ENCODE measurements at regions of chr9 and their contacts with region 1.

Region 1: DNA sequence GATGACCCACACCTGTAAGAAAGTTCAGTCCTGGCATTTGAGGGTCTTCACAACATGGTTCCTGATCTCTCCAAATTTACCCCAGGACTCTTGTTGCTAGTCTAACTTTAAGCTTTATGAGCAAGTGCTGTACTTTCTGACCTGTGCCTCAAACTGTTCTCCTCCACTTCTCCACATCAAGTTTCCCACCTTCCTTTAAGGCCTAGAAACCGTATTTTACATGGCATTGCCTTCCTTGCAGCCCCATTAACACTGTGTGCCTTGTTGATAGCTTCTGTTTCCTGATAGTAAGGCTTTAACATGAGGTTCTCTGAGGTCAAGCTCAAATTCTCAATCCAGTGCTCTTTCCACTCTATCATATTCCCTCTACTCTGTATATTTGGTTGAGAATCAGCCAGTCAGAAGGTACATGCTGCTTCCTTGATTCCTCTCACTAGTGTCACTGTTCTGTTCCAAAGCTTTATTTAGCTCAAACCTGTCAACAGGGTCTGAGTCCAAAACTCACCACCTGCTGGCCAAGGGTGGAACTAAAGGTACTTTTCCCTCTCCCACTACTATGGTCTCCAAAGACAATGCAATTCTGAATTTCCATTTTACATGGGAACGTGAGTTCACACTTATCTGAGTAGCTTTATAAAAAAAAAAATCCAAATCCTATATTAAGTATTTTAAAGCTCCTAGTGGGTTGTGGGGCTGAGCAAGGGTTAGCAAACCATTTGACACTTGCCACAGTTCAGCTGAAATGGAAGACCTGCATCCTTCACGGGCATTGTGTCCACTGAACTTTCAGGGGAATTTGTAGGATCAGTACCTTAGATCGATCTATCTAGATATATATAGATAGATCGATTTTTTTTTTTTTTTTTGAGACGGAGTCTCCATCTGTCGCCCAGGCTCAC is 21.1 kb downstream of the VCP start:
- DNase-seq: peak; percentile 71
- ATAC-seq: peak; percentile 84
- H3K4me3 Mint-ChIP-seq: no peak overlapping the region
- H3K27ac Mint-ChIP-seq: peak overlapping the region; percentile 54
- H3K4me1 Mint-ChIP-seq: peaks cover 3% of the 10 kb centered on the region; the same call in 1 of the 2 replicates
- H3K27me3 Mint-ChIP-seq: no peaks in the 10 kb centered on the region
- CTCF ChIP-seq: peak; percentile 68

Region 2: GRCh38 chr9:34876096-34876495 is 175.2 kb before region 1 on chr9:
- CTCF ChIA-PET with region 1: no interaction called
- POLR2A ChIA-PET with region 1: no interaction called
- DNase-seq: no peak
- ATAC-seq: no peak
- H3K4me3 Mint-ChIP-seq: no peak overlapping the region
- H3K27ac Mint-ChIP-seq: no peak overlapping the region
- H3K4me1 Mint-ChIP-seq: no peaks in the 10 kb centered on the region
- H3K27me3 Mint-ChIP-seq: peaks cover 29% of the 10 kb centered on the region
- CTCF ChIP-seq: no peak

Region 3: DNA sequence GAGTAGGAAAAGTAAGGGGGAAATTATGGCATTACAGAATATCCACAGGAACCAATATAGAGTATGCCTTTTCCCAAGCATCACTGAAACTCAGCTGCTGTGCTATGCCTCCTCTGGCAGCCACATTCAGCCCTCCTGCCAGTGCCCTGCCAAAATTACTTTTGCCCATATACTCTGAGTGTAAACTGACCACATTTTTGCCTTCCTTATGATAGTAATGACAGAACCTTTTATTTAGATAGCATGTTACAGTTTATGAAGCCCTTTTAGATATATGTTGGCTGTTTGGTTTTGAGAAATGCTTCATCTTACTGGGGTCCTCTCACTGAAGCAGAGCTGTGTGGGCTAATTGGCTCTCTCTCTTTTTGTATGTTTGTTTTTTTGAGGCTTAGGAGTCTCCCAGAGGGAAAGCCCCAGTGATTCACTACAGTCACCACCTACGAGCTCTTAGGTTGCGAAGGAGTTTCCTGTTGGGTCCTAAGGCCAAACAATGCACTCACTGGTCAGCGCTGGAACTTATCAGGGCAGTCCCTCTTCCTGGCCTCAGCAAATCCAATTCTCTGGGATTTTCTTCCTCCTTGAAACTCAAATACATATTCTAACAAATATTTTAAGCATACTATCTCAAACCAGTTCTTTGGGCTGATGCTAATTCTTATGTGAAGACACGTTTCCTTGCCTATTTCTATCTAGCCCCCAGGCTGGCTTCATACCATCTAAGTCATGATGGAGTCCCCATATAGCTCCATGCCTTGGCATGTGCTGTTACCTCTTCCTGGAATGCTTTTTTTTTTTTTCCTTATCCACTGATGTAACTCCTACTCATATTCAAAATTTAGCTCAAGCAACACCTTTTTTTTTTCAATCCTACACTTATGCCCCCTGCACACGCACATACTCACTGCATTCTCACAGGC is 89.5 kb before region 1 on chr9:
- CTCF ChIA-PET with region 1: no interaction called
- POLR2A ChIA-PET with region 1: no interaction called
- DNase-seq: no peak
- ATAC-seq: no peak
- H3K4me3 Mint-ChIP-seq: no peak overlapping the region
- H3K27ac Mint-ChIP-seq: no peak overlapping the region
- H3K4me1 Mint-ChIP-seq: peaks cover 19% of the 10 kb centered on the region
- H3K27me3 Mint-ChIP-seq: peaks cover 42% of the 10 kb centered on the region
- CTCF ChIP-seq: no peak

Region 4: DNA sequence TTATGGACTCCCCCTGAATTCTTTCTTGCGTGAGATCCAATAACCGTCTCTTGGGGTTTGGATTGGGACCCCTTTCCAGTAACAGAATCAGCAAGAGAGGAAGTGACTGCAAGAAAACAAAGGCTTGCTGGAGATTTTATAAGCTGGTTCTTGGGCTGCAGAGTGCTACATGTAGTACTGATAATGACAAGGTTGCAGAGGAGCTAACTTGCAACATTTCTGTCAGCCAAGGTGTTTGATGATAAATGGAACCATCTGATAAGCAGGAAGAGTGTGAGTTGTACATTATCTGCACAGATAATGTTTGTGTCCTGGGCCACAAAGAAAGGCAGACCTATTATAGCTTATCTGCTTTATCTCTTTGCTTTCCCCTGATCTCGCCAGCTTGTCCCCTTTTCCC is 24.6 kb before region 1 on chr9:
- CTCF ChIA-PET with region 1: interaction called, 21 read pairs
- POLR2A ChIA-PET with region 1: no interaction called
- DNase-seq: no peak
- ATAC-seq: no peak; the same call in 1 of the 2 replicates
- H3K4me3 Mint-ChIP-seq: no peak overlapping the region
- H3K27ac Mint-ChIP-seq: peak overlapping the region; percentile 72
- H3K4me1 Mint-ChIP-seq: peaks cover 37% of the 10 kb centered on the region
- H3K27me3 Mint-ChIP-seq: peaks cover 13% of the 10 kb centered on the region
- CTCF ChIP-seq: no peak

Region 5: GRCh38 chr9:35033101-35033500 is 18.2 kb before region 1 on chr9:
- CTCF ChIA-PET with region 1: interaction called, 21 read pairs
- POLR2A ChIA-PET with region 1: no interaction called
- DNase-seq: no peak
- ATAC-seq: no peak
- H3K4me3 Mint-ChIP-seq: no peak overlapping the region
- H3K27ac Mint-ChIP-seq: no peak overlapping the region
- H3K4me1 Mint-ChIP-seq: peaks cover 9% of the 10 kb centered on the region
- H3K27me3 Mint-ChIP-seq: no peaks in the 10 kb centered on the region; the same call in 1 of the 2 replicates
- CTCF ChIP-seq: no peak

Region 6: DNA sequence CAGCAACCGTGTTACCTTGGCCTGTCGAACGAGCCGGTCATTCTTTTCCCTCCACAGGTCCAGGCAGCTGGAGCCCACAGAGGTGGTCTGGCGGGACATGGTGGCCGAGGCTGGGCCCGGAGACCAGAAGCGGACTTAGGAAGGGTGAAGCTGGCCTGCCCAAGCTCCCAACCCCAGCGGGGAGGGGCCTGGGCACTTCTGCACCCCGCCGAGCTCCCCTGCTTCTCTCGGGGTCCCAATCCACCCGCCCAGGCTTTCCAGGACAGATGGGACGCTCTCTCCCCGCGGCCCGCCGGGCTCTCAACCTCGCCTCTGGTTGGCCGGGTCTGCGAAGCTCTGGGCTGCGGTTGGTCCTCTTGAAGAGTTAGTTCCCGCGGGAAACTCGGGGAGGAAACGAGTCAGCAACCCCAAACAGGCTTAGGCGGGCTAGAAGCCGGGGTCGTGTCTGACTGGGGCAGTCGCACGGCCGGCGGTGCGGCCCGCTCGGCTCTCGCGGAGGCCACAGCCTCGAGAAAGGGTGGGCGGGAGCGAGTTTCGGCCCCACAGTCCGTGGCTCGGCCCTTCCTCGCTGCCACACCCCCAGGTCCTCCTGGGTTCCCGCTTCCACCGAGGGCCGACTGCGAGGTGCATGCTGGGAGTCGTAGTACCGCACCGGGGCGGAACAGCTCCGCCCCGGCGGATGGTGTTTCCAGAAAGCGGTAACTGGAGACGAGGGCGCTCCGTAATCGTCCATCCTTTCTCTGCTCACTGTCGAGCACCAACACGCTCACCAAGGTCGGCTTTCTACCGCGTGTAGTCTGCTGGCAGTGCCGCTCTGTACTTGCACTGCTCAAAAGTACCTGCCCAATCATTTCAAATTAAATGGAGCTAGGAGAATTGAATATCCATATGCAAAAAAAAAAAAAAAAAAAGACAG is 28.4 kb after region 1 on chr9 and contains the start of gene FANCG:
- CTCF ChIA-PET with region 1: interaction called, 19 read pairs
- POLR2A ChIA-PET with region 1: interaction called, 3 read pairs
- DNase-seq: peak; percentile 89
- ATAC-seq: peak; percentile 92
- H3K4me3 Mint-ChIP-seq: peak within 1 kb of the TSS; percentile 92
- H3K27ac Mint-ChIP-seq: peak within 1 kb of the TSS; percentile 99
- H3K4me1 Mint-ChIP-seq: peaks cover 15% of the 10 kb centered on the region
- H3K27me3 Mint-ChIP-seq: no peaks in the 10 kb centered on the region
- CTCF ChIP-seq: no peak
- total RNA-seq, gene FANCG: 80.9 to 108 TPM (median 89.1 TPM) in 3 replicates

Measured in WTC11 (cell line).